ENCODE measurements at regions of chr7 and their contacts with region 1.

Region 1: GRCh38 chr7:120857588-120858573 is at the start of gene TSPAN12:
- DNase-seq: no peak
- ATAC-seq: peak; percentile 81
- H3K4me3 ChIP-seq: peak within 1 kb of the TSS; percentile 70
- H3K27ac ChIP-seq: 0 out of 2 replicates have a peak within 1 kb of the TSS, but pooled peaks have one; percentile 46
- H3K4me1 ChIP-seq: no peaks in the 10 kb centered on the region
- H3K27me3 ChIP-seq: peaks cover 0 to 4% of the 10 kb centered on the region in 2 experiments; a peak in 1 of 4 replicates
- CTCF ChIP-seq: peak; percentile 67 to 79 (median 75); a peak in 5 of 6 replicates
- EP300 ChIP-seq: no peak
- POLR2A ChIP-seq: peak; percentile 66
- RAD21 ChIP-seq: peak; percentile 61
- polyA plus RNA-seq, gene TSPAN12: 0.75 to 1.3 TPM

Region 2: DNA sequence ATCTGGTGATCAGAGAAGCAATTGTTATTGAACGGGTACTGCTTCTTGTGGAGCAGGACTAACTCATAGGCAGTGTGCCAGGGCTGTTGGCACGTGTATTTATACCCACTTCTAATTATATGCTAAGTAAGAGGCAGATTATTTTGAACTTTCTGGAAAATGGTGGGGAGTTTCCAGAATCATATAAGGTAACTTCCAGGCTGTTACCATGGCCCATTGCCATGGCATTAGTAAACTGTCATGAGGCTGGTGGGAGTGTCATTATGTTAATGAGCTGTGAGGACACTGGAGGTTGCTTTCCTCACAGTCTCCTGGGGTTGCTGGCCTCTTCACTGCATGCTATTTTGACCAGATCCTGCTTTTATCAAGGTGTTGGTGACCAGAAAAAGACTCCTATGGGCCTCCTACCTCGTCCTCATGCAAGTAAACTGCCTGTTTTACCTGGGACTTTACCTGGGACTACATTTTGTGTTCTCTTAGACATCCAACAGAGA is 462.3 kb before region 1 on chr7:
- CTCF ChIA-PET with region 1: no interaction called
- POLR2A ChIA-PET with region 1: no interaction called
- RAD21 ChIA-PET with region 1: no interaction called
- SMC1A ChIA-PET with region 1: no interaction called
- in situ Hi-C with region 1: no loop called
- intact Hi-C with region 1: loop called (anchors 5 kb)
- DNase-seq: peak; percentile 81
- ATAC-seq: peak; percentile 85
- H3K4me3 ChIP-seq: peak overlapping the region; percentile 62
- H3K27ac ChIP-seq: peak overlapping the region; percentile 32
- H3K4me1 ChIP-seq: peaks cover 18% of the 10 kb centered on the region
- H3K27me3 ChIP-seq: no peaks in the 10 kb centered on the region
- CTCF ChIP-seq: no peak
- EP300 ChIP-seq: peak; percentile 7 to 48; a peak in 1 of 4 replicates
- POLR2A ChIP-seq: peak; percentile 59
- RAD21 ChIP-seq: no peak

Region 3: DNA sequence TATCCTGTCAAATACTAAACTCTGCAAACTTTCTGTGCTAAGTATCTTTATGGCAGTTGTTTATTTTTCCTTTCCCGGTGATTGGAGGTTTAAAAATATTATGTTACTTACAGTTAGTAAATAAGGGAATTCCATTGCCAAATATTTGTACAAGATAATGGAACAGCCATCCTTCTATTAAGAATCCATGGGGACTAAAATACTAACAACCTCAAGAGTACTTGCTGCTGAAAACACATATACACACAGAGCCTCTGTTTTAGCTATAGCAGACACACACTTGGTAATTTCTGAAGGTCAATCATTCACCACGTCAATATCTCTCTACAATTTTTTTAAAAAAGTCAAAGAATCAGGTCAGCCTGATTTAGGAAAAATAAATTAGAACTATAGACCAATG is 32.3 kb before region 1 on chr7:
- CTCF ChIA-PET with region 1: interaction called, 10 read pairs
- POLR2A ChIA-PET with region 1: interaction called, 4 read pairs
- RAD21 ChIA-PET with region 1: interaction called, 5 read pairs
- SMC1A ChIA-PET with region 1: interaction called, 20 read pairs
- in situ Hi-C with region 1: no loop called
- intact Hi-C with region 1: loop called (anchors 5 kb)
- DNase-seq: no peak
- ATAC-seq: no peak
- H3K4me3 ChIP-seq: no peak overlapping the region
- H3K27ac ChIP-seq: no peak overlapping the region
- H3K4me1 ChIP-seq: no peaks in the 10 kb centered on the region
- H3K27me3 ChIP-seq: no peaks in the 10 kb centered on the region
- CTCF ChIP-seq: no peak
- EP300 ChIP-seq: no peak
- POLR2A ChIP-seq: no peak
- RAD21 ChIP-seq: no peak

Region 4: GRCh38 chr7:120867932-120868331 is 10.1 kb after region 1 on chr7:
- CTCF ChIA-PET with region 1: interaction called, 6 read pairs
- POLR2A ChIA-PET with region 1: interaction called, 5 read pairs
- RAD21 ChIA-PET with region 1: interaction called, 13 read pairs
- SMC1A ChIA-PET with region 1: interaction called, 16 read pairs
- in situ Hi-C with region 1: no loop called
- intact Hi-C with region 1: no loop called
- DNase-seq: no peak
- ATAC-seq: peak; percentile 91
- H3K4me3 ChIP-seq: no peak overlapping the region
- H3K27ac ChIP-seq: no peak overlapping the region
- H3K4me1 ChIP-seq: peaks cover 17% of the 10 kb centered on the region
- H3K27me3 ChIP-seq: no peaks in the 10 kb centered on the region
- CTCF ChIP-seq: no peak
- EP300 ChIP-seq: 0 out of 4 replicates have a peak, but pooled peaks of 1 of the 2 experiments have one; percentile 52
- POLR2A ChIP-seq: no peak
- RAD21 ChIP-seq: no peak

Region 5: DNA sequence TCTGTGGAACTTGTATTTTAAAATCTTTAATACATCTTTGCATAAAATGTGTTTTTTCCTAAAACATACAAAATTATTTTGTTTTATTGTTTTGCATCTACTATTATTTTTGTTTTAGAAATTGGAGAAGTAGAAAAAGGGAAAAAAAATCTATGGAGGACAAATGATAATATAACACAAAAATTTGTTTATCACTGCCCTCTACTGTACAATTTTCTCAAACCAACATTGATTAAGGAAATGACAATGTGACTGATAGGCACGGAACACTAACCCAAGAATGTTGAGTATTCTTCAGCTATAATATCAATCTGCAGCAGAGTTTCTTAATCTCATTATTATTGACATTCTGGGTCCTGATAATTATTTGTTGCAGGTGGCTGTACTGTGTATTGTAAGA is 83.2 kb after region 1 on chr7:
- CTCF ChIA-PET with region 1: interaction called, 5 read pairs
- POLR2A ChIA-PET with region 1: interaction called, 3 read pairs
- RAD21 ChIA-PET with region 1: no interaction called
- SMC1A ChIA-PET with region 1: interaction called, 5 read pairs
- in situ Hi-C with region 1: no loop called
- intact Hi-C with region 1: loop called (anchors 1 kb)
- DNase-seq: no peak
- ATAC-seq: peak; percentile 84
- H3K4me3 ChIP-seq: no peak overlapping the region
- H3K27ac ChIP-seq: no peak overlapping the region
- H3K4me1 ChIP-seq: no peaks in the 10 kb centered on the region
- H3K27me3 ChIP-seq: no peaks in the 10 kb centered on the region
- CTCF ChIP-seq: peak in 2 of 3 experiments; percentile 23 to 50; a peak in 2 of 6 replicates
- EP300 ChIP-seq: no peak
- POLR2A ChIP-seq: no peak
- RAD21 ChIP-seq: peak; percentile 48

Region 6: DNA sequence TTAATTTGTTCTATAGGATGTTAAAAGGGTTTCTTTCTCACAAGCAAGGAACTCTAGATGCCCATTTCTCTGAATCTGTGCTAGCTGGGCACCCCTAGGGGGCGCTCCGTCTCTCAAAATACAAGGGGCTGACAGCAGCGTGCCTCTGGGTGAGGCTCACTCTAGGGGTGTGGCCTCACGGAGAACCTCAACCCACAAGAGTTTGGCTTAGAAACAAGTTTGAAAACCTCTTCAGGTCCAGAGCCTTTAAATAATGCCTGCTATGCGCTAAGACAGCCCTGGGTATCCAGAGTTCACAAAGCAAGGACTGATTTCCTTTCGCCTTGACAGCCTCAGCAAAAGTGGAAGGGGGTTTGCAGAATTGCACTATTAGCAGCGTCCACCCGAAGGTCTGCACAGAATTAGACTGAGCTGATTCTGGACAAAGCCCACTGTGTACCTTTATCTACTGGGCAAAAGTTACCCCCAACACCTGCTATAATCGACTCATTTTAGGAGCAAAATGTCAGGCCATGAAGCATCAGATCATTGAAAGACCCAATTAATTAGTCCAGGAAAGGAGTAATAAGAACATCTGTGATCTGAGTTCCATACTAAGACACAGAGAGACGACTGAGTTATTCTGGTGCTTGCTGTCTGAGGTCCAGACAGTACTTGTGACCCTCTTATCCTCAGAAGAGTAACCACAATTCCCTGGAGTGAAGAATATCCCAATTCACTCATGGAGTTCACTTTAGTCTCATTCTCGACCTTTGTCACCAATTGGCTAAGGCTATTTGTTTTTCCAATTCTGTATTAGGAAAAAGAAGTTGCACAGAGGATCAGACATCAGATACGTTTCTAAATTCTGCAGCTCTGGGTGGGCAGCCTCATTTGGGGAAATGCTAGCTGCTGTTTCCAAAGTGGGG is 130.1 kb after region 1 on chr7:
- CTCF ChIA-PET with region 1: no interaction called
- POLR2A ChIA-PET with region 1: no interaction called
- RAD21 ChIA-PET with region 1: no interaction called
- SMC1A ChIA-PET with region 1: no interaction called
- in situ Hi-C with region 1: no loop called
- intact Hi-C with region 1: no loop called
- DNase-seq: peak; percentile 47
- ATAC-seq: peak; percentile 97
- H3K4me3 ChIP-seq: peak overlapping the region; percentile 45; the same call in 1 of the 2 replicates
- H3K27ac ChIP-seq: no peak overlapping the region
- H3K4me1 ChIP-seq: peaks cover 21% of the 10 kb centered on the region
- H3K27me3 ChIP-seq: peaks cover 0 to 15% of the 10 kb centered on the region in 2 experiments
- CTCF ChIP-seq: peak; percentile 89 to 98 (median 95)
- EP300 ChIP-seq: no peak
- POLR2A ChIP-seq: no peak
- RAD21 ChIP-seq: peak; percentile 90

Region 7: GRCh38 chr7:121385800-121386179 is 527.9 kb after region 1 on chr7:
- CTCF ChIA-PET with region 1: no interaction called
- POLR2A ChIA-PET with region 1: no interaction called
- RAD21 ChIA-PET with region 1: no interaction called
- SMC1A ChIA-PET with region 1: no interaction called
- in situ Hi-C with region 1: no loop called
- intact Hi-C with region 1: loop called (anchors 10 kb)
- DNase-seq: peak; percentile 76
- ATAC-seq: peak; percentile 79
- H3K4me3 ChIP-seq: no peak overlapping the region
- H3K27ac ChIP-seq: peak overlapping the region; percentile 92
- H3K4me1 ChIP-seq: peaks cover 43% of the 10 kb centered on the region
- H3K27me3 ChIP-seq: no peaks in the 10 kb centered on the region
- CTCF ChIP-seq: no peak
- EP300 ChIP-seq: peak; percentile 87 to 94; a peak in 3 of 4 replicates
- POLR2A ChIP-seq: no peak
- RAD21 ChIP-seq: no peak

Measured in GM12878 (cell line).